Naive thymus-derived CD8-positive, alpha-beta T cell (primary cell): ENCODE measurements at regions of chr12 and their contacts with region 1.

Region 1: DNA sequence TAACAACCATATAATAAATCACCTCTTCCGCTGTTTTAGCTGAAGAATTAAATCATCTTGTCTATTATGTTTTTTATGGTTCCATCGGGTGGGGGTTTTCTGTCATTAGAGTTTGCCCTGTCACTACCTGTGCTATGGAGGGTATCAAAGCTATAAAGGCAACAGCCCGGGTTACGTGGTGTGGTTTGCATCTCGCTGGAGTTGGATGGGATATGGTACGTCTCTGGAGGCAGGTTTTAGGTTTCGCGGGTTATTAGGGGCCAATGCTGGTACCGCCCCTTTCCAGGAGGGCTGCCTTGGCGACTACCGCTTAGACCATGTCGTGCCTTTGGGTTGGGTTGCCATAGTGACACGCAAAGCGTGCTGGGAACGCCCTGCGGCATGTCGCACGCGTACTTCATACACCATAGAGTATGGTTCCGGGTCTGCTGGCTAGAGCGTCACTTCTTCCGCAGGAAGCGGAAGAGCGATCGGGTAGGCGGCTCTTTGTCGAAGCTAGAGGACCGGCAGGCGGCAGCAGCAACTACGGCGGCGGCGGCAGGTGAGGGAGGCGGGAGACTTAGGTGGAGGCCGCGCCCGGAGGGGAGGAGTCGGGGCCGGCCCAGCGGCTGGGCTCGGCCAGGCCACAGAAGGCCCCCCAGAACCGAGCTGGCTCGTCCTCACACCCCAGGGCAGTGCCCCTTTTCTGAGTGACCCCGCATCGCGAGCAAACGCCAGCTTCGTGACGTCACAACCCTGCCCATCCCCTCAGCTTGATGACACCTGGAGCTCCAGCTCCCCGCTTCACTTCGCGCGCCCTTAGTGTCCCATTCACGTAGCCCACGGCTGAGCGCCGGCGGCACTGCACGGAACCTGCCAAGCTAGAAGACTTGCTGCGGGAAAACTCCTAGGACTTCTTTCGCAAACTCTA is at the start of gene ZC3H10:
- DNase-seq: peak; percentile 85 to 99 (median 97)
- ATAC-seq: peak; percentile 74 to 82
- H3K4me3 Mint-ChIP-seq: peak within 1 kb of the TSS; percentile 95 to 99 (median 98)
- H3K27ac Mint-ChIP-seq: peak within 1 kb of the TSS; percentile 92 to 100 (median 98)
- H3K4me1 Mint-ChIP-seq: peaks cover 27 to 46% (median 38%) of the 10 kb centered on the region in 4 donors
- H3K27me3 Mint-ChIP-seq: no peaks in the 10 kb centered on the region
- polyA plus RNA-seq, gene ZC3H10: 1.3 to 2.5 (median 1.8) TPM

Region 2: DNA sequence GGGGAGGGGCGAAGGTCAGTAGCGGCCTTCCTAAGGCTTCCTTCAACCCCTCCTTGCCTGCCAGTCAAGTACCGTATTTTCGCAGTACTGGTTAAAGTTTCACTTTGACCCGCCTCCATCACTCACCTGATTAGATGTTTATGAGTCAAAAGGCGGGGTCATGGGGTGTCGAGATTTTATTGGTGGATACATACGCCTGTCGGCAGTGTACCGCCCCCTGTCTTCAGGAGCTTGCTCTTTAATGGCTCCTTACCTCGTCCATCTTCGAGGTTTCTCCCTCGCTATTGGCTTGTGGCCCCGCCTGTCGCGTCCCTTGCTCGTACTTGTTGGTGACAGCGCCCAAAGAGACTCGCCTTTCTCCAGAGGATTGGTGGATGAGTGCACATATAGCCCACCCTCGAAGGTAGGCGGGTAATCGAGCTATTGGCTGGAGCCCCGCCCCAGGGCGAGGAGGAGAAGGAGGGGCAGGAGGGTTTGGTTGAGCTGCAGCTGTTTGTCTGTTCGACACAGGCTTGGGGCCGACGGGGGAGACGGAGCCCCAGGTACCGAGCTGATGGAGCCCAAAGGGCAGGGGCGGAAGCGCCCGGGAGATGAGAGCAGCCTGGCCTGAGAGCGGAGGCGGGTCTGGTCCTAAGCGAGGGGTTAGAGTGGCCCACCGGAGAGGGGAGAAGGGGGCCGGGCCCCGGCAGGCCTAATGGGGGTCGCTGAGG is 144.3 kb before region 1 on chr12 and contains the start of gene RAB5B:
- POLR2A ChIA-PET with region 1: interaction called, 15 read pairs
- DNase-seq: peak; percentile 89 to 100 (median 98)
- ATAC-seq: peak; percentile 90
- H3K4me3 Mint-ChIP-seq: no peak within 1 kb of the TSS
- H3K27ac Mint-ChIP-seq: no peak within 1 kb of the TSS
- H3K4me1 Mint-ChIP-seq: peaks cover 10 to 28% (median 24%) of the 10 kb centered on the region in 4 donors
- H3K27me3 Mint-ChIP-seq: no peaks in the 10 kb centered on the region
- polyA plus RNA-seq, gene RAB5B: 61.6 to 69.4 (median 65.9) TPM

Region 3: GRCh38 chr12:56078990-56079664 is 38.9 kb before region 1 on chr12:
- POLR2A ChIA-PET with region 1: interaction called, 31 read pairs
- DNase-seq: peak; percentile 30 to 74 (median 50)
- ATAC-seq: peak; percentile 73 to 76
- H3K4me3 Mint-ChIP-seq: peak overlapping the region; percentile 81 to 91 (median 86)
- H3K27ac Mint-ChIP-seq: peak overlapping the region in 6 of 10 donors; percentile 2 to 64 (median 36)
- H3K4me1 Mint-ChIP-seq: peaks cover 0 to 14% (median 9%) of the 10 kb centered on the region in 4 donors
- H3K27me3 Mint-ChIP-seq: peaks cover 0 to 6% (median 0%) of the 10 kb centered on the region in 5 donors

Region 4: GRCh38 chr12:56127888-56128669 is 10.0 kb after region 1 on chr12 and contains the start of gene ESYT1:
- POLR2A ChIA-PET with region 1: interaction called, 106 read pairs
- DNase-seq: peak; percentile 86 to 100 (median 98)
- ATAC-seq: peak; percentile 83 to 90
- H3K4me3 Mint-ChIP-seq: peak within 1 kb of the TSS; percentile 97 to 100 (median 99)
- H3K27ac Mint-ChIP-seq: peak within 1 kb of the TSS; percentile 90 to 99 (median 96)
- H3K4me1 Mint-ChIP-seq: peaks cover 32 to 78% (median 60%) of the 10 kb centered on the region in 4 donors
- H3K27me3 Mint-ChIP-seq: no peaks in the 10 kb centered on the region
- polyA plus RNA-seq, gene ESYT1: 354 to 433 (median 357) TPM

Region 5: DNA sequence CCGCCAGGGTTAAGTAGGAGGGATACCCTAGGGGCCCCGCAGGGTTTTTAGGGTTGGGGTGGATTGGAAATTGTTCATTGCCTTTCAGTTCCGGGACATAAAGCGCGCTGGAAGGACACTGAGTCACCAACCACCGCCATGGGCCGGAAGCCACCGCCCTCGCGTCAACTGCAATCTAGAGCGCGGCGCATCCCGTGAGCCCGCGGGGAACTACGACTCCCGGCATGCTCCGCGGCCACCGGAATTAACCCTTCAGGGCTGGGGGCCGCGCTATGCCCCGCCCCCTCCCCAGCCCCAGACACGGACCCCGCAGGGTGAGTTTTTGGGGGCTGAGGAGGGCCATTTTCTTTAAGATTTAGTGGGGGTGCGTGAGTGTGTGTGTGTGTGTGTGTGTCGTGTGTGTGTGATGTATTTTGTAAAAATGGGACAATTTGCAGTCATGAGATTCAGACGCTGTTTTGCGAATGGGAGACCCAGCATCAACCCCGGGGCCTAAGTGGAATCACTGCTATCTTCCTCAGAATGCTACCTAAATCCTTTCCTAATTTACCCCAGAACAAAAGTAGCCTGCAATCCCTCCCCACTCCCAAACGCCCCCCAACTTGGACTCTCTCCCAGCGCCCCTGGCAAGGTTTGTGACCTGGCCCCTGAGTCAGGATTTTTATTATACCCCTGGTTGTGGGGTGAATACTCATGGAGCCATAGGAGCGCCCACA is 34.4 kb after region 1 on chr12 and contains the start of gene MYL6B:
- POLR2A ChIA-PET with region 1: interaction called, 163 read pairs
- DNase-seq: peak; percentile 85 to 94 (median 87)
- ATAC-seq: peak; percentile 89 to 91
- H3K4me3 Mint-ChIP-seq: peak within 1 kb of the TSS; percentile 81 to 95 (median 92)
- H3K27ac Mint-ChIP-seq: peak within 1 kb of the TSS; percentile 93 to 99 (median 98)
- H3K4me1 Mint-ChIP-seq: peaks cover 17 to 47% (median 40%) of the 10 kb centered on the region in 4 donors
- H3K27me3 Mint-ChIP-seq: no peaks in the 10 kb centered on the region
- polyA plus RNA-seq, gene MYL6B: 3.4 to 4.0 (median 3.8) TPM

Region 6: GRCh38 chr12:56189176-56189917 is 71.3 kb after region 1 on chr12 and contains the start of gene SMARCC2:
- POLR2A ChIA-PET with region 1: interaction called, 284 read pairs
- DNase-seq: peak; percentile 74 to 91 (median 82)
- ATAC-seq: peak; percentile 82 to 84
- H3K4me3 Mint-ChIP-seq: peak within 1 kb of the TSS; percentile 89 to 99 (median 96)
- H3K27ac Mint-ChIP-seq: peak within 1 kb of the TSS; percentile 97 to 100 (median 98)
- H3K4me1 Mint-ChIP-seq: peaks cover 39 to 51% (median 43%) of the 10 kb centered on the region in 4 donors
- H3K27me3 Mint-ChIP-seq: peaks cover 0 to 3% (median 0%) of the 10 kb centered on the region in 5 donors
- polyA plus RNA-seq, gene SMARCC2: 46.3 to 70.4 (median 54.1) TPM

Region 7: GRCh38 chr12:56243731-56244181 is 125.7 kb after region 1 on chr12:
- POLR2A ChIA-PET with region 1: no interaction called
- DNase-seq: no peak
- ATAC-seq: no peak
- H3K4me3 Mint-ChIP-seq: no peak overlapping the region
- H3K27ac Mint-ChIP-seq: no peak overlapping the region
- H3K4me1 Mint-ChIP-seq: peaks cover 0 to 5% (median 0%) of the 10 kb centered on the region in 4 donors
- H3K27me3 Mint-ChIP-seq: no peaks in the 10 kb centered on the region

Region 8: DNA sequence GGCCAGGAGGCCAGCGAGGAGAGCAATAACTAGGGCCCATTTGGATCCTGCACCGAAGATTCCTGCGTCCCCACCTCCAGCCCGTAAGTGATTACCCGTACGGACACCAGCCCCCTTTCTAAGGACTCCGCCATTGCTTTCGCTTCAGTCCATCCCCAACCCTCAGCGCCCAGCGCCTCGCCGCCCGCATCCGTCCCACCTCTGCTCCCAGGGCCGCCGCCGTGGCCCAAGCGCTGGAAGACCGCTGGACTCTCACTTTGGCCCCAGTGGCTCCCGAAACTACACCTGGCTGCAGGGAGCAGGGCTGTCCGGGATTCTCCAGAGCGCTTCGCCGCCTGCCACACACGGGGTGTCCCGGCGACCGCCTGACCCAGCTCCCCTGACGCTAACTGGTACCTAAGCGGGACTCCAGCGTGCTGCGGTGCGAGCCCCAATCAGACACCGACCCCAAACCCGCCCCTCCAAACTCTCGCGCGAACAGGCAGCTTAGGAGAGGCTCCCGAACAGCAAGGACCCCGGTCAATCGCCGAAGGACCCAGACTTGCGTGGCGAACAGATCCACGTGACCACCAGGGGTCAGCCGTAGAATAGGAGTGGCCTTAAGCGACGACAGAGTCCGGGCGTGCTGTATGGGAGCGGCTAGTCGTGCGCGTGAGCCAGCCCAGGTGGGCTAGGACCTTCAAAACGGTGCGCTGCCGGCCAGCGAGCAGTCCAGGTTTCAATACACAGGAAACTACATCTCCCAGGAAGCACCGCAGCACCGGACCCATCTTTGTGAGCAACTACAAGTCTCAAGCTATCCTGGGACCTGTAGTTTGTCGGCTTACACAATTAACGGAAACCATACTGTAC is 197.8 kb after region 1 on chr12 and contains the start of gene CNPY2:
- POLR2A ChIA-PET with region 1: interaction called, 18 read pairs
- DNase-seq: peak; percentile 86 to 98 (median 93)
- ATAC-seq: peak; percentile 92
- H3K4me3 Mint-ChIP-seq: peak within 1 kb of the TSS; percentile 95 to 100 (median 98)
- H3K27ac Mint-ChIP-seq: peak within 1 kb of the TSS; percentile 96 to 100 (median 98)
- H3K4me1 Mint-ChIP-seq: peaks cover 5 to 18% (median 17%) of the 10 kb centered on the region in 4 donors
- H3K27me3 Mint-ChIP-seq: no peaks in the 10 kb centered on the region
- polyA plus RNA-seq, gene CNPY2: 173 to 196 (median 179) TPM

Region 9: GRCh38 chr12:58009405-58010195 is 1891.6 kb after region 1 on chr12:
- POLR2A ChIA-PET with region 1: no interaction called
- DNase-seq: no peak
- ATAC-seq: no peak
- H3K4me3 Mint-ChIP-seq: no peak overlapping the region
- H3K27ac Mint-ChIP-seq: no peak overlapping the region
- H3K4me1 Mint-ChIP-seq: peaks cover 2 to 12% (median 7%) of the 10 kb centered on the region in 4 donors
- H3K27me3 Mint-ChIP-seq: peaks cover 5 to 11% (median 7%) of the 10 kb centered on the region in 5 donors